Calu3 (cell line): ENCODE measurements at regions of chr6 and their contacts with region 1.

Region 1: GRCh38 chr6:593139-593906 is 63.6 kb downstream of the HUS1B start:
- DNase-seq: peak; percentile 40
- H3K4me3 Mint-ChIP-seq: no peak overlapping the region
- H3K27ac Mint-ChIP-seq: no peak overlapping the region
- H3K4me1 Mint-ChIP-seq: no peaks in the 10 kb centered on the region
- H3K27me3 Mint-ChIP-seq: no peaks in the 10 kb centered on the region
- CTCF ChIP-seq: no peak

Region 2: DNA sequence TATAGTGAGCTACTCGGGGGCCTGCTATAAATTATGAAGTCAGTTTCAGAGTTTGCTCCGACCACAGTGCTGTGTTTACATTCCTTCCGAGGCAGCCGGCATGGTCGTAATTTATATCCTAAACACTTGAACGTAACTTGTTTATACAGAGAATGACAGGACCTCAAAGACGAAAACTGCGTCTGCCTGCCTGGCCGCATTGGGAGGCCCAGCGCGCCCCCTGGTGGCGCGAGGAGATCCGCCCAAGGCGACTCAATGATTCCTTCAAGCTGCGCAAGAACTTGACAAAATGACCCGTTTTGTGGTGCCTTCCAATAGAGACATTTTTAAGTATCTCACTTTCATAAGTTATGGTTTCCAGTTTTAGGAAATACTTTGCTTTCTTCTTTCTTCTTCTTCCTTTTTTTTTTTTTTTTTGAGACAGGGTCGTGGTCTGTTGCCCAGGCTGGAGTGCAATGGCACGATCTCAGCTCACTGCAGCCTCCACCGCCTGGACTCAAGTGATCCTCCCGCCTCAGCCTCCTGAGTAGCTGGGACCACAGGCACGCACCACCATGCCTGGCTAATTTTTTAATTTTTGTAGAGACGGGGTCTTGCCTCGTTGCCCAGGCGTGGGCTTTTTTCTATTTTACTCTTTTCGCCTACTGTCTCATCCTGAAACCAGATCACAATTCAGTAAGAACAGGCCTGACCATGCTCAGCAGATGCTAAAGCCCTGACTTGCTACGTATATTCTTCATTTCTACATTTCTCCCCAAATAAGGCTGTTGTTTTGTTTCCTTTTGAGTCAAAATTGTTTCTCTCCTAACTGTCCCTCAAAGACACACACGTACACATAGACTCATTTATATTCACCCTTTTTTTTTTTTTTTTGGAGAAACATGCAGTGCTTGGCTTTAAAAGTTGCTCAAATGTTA is 803.9 kb after region 1 on chr6:
- CTCF ChIA-PET with region 1: interaction called, 5 read pairs
- intact Hi-C with region 1: loop called (anchors 1 kb)
- DNase-seq: peak; percentile 69
- H3K4me3 Mint-ChIP-seq: no peak overlapping the region
- H3K27ac Mint-ChIP-seq: no peak overlapping the region
- H3K4me1 Mint-ChIP-seq: no peaks in the 10 kb centered on the region
- H3K27me3 Mint-ChIP-seq: peaks cover 62% of the 10 kb centered on the region
- CTCF ChIP-seq: peak; percentile 56

Region 3: DNA sequence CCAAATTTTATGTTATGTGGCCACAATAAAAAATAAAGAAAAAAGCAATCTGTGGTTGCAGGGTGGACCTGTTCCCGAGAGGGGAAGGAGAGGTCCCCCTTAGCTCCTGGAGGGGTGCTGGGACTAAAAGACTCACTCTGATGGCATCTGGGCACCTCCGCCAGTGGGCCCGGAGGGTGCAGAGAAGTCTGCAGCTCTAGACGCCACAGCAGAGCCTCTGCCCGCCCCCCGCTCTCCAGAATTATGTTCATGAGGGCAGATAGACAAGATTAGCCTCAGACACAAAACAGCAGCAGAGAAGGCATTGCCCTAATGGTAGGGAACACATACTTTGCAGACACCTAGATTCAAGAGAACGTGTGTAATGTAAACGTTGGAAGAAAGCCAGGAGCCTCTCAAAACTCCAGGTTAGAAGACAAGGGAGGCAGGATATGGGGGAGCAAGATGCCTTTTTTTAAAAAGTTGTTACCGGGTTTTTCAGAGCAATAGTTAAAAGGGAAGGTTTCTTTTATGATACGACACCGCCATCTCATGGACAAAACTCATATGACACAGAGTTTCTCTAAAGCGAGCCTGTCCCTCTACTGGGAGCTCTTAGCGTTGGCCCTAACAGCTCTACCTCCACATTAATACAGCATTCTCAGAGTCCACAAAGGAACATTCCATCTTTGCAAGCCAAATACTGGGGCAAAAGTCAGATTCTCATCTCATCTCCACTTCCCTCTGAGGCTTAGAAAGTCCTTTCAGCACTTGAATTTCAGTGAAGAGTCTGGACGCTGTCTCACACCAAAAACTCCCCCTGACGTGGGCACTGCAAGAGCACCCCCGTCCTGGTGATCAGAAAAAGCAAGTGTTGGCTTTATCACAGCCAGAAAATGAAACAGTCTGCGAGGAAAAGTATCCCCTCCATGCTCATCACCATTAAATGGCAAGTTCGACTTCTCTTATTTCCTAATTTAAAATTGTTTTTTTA is 843.3 kb after region 1 on chr6:
- CTCF ChIA-PET with region 1: interaction called, 4 read pairs
- intact Hi-C with region 1: loop called (anchors 2 kb)
- DNase-seq: peak; percentile 53
- H3K4me3 Mint-ChIP-seq: no peak overlapping the region
- H3K27ac Mint-ChIP-seq: no peak overlapping the region
- H3K4me1 Mint-ChIP-seq: no peaks in the 10 kb centered on the region
- H3K27me3 Mint-ChIP-seq: peaks cover 67% of the 10 kb centered on the region
- CTCF ChIP-seq: peak; percentile 38